Left cardiac atrium (tissue), 4 donors: ENCODE measurements at regions of chr11 and their contacts with region 1.

Region 1: GRCh38 chr11:36478700-36479329 is 31.3 kb downstream of the TRAF6 start:
- DNase-seq: no peak
- ATAC-seq: peak; percentile 55 to 72

Region 2: DNA sequence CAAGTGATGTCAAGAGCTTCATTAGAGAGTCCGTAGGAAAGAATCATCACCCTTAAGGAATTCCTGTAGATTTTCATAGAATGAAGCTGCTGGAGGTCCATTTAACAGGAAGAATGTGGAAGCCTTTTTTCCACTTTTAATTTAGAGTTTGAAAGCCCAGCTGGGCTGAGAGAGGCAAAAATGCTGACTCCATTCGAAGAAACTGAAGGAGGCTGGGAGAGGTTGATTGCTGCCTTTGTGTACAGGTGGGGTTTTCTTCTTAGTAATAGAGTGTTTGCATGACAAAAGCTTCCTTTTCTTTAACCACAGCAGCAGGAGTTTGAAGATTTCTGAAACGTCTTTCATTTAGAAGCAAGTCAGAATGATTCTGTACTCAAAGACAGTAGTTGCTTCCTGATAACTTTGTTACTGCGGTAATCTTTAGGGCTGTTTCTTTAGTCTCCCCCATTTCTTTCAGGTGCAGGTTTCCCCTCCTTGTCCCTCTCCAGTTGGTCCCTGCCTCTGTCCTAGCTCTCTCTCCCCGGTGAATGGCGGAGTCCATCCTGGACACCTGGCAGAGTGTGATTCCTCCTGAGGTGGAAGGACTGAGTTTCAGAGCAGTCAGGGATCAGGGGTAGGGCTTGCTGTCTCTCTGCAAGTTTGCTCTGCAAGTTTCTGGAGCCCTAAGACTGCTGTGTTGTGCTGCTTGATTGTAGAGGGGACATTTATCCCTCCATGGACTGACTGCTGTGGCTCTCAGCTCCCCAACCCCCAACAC is 368.8 kb before region 1 on chr11:
- intact Hi-C with region 1: no loop called
- DNase-seq: no peak
- ATAC-seq: no peak

Region 3: DNA sequence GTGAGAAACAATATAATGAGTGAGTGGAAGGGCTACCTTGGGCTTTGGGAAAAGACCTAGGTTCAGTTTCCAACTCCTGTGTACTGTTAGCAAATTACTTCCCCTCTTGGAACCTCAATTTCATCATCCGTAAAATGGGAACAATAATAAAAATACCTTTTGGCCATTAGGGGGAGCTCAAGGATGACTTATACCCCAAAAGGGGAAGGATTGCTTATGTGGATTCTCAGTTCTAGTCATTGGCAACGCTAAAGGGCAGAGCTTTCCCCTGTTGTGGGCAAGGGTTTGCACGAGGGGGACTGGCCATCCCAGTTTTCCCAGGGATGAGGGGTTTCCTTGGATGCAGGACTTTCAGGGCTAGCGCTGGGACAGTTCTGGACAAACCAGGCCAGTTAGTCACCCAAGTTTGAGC is 186.5 kb before region 1 on chr11:
- intact Hi-C with region 1: loop called (anchors 5 kb)
- DNase-seq: no peak
- ATAC-seq: peak in 1 of 2 donors; percentile 11

Region 4: DNA sequence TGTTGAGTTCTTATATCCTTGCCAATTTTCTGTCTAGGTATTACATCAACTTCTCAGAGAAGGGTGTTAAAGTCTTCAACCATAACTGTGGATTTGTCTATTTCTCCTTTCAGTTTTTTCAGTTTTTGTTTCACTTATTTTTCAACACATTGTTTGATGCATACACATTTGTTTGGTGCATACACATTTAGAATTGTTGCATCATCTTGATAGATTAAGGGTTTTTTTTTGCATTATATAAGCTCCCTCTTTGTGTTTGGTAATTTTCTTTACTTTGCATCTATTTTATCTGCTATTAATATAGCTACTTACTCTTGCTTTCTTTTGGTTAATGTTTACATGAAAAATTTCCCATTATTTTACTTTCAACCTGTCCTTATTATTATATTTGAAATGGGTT is 52.0 kb after region 1 on chr11:
- intact Hi-C with region 1: no loop called
- DNase-seq: no peak
- ATAC-seq: no peak

Region 5: GRCh38 chr11:36541001-36541400 is 62.2 kb after region 1 on chr11:
- intact Hi-C with region 1: no loop called
- DNase-seq: no peak
- ATAC-seq: peak in 1 of 2 donors; percentile 27